GM10248 (cell line): ENCODE measurements at regions of chr20 and their contacts with region 1.

Region 1: GRCh38 chr20:50523552-50524167 is 13.5 kb downstream of the PTPN1 start:
- DNase-seq: no peak
- CTCF ChIP-seq: no peak

Region 2: GRCh38 chr20:50438986-50439407 is 84.7 kb before region 1 on chr20:
- CTCF ChIA-PET with region 1: no interaction called
- POLR2A ChIA-PET with region 1: no interaction called
- DNase-seq: no peak
- CTCF ChIP-seq: no peak

Region 3: DNA sequence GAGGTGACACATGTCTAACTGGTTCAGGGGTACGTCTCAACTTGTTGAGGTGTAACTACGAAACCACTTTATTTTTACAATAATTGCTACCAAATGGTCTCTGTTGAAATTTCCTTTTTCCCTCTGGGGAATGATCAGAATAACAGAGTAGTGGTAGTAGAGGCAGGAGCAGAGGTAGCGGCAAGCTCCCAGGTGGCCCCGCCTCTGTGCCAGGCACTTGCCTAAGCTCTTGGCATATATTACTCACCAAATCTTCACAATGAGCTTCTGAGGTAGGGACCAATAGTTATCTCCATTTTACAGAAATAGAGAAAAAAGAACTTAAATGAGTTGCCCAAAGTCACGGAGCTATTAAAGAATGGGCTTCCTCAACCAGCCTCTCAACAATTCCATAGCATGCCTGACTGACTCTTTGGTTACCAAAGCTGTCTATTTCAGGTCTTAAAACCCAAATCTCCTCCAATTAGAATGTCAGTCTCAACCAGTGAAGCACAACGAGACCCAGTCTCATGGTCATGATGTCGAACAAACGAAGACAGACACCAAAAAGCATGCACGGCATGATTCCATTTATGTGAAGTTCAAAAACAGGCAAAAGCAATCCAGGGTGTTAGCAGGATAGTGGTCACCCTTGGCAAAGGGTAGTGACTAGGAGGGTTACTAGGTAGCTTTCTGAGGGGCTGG is 29.9 kb before region 1 on chr20:
- CTCF ChIA-PET with region 1: no interaction called
- POLR2A ChIA-PET with region 1: no interaction called
- DNase-seq: no peak
- CTCF ChIP-seq: no peak

Region 4: DNA sequence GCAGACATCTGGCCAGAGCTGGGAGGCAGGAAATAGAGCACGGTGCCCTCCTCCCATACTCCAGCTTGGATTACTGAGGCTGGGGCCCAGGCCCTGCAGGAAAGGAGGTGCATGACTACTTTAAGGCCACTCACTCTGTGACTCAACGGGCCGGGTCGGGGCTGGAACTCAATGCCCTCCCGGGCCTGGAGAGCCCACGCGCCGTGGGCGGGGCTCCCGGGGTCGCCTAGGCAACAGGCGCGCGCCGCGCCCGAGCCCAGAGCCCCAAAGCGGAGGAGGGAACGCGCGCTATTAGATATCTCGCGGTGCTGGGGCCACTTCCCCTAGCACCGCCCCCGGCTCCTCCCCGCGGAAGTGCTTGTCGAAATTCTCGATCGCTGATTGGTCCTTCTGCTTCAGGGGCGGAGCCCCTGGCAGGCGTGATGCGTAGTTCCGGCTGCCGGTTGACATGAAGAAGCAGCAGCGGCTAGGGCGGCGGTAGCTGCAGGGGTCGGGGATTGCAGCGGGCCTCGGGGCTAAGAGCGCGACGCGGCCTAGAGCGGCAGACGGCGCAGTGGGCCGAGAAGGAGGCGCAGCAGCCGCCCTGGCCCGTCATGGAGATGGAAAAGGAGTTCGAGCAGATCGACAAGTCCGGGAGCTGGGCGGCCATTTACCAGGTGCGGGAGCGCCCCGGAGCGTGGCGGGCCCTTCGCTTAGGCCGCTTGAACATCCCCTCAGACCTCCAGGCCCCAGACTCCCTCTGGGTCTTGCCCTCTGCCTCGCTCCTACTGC is 13.5 kb before region 1 on chr20 and contains the start of gene PTPN1:
- CTCF ChIA-PET with region 1: interaction called, 44 read pairs
- POLR2A ChIA-PET with region 1: no interaction called
- DNase-seq: peak; percentile 96
- CTCF ChIP-seq: no peak

Region 5: GRCh38 chr20:50569864-50570836 is 46.5 kb after region 1 on chr20:
- CTCF ChIA-PET with region 1: interaction called, 10 read pairs
- POLR2A ChIA-PET with region 1: no interaction called
- DNase-seq: peak; percentile 79
- CTCF ChIP-seq: peak; percentile 62